Activated naive CD4-positive, alpha-beta T cell treated with anti-CD3 and anti-CD28 coated beads for 36 hours (primary cell): ENCODE measurements at regions of chr1 and their contacts with region 1.

Region 1: GRCh38 chr1:247681288-247681897 is 1.9 kb upstream of the OR13G1 start:
- DNase-seq: peak; percentile 64
- H3K4me3 Mint-ChIP-seq: no peak overlapping the region
- H3K27ac Mint-ChIP-seq: no peak overlapping the region
- H3K4me1 Mint-ChIP-seq: no peaks in the 10 kb centered on the region
- H3K27me3 Mint-ChIP-seq: peaks cover 4% of the 10 kb centered on the region

Region 2: DNA sequence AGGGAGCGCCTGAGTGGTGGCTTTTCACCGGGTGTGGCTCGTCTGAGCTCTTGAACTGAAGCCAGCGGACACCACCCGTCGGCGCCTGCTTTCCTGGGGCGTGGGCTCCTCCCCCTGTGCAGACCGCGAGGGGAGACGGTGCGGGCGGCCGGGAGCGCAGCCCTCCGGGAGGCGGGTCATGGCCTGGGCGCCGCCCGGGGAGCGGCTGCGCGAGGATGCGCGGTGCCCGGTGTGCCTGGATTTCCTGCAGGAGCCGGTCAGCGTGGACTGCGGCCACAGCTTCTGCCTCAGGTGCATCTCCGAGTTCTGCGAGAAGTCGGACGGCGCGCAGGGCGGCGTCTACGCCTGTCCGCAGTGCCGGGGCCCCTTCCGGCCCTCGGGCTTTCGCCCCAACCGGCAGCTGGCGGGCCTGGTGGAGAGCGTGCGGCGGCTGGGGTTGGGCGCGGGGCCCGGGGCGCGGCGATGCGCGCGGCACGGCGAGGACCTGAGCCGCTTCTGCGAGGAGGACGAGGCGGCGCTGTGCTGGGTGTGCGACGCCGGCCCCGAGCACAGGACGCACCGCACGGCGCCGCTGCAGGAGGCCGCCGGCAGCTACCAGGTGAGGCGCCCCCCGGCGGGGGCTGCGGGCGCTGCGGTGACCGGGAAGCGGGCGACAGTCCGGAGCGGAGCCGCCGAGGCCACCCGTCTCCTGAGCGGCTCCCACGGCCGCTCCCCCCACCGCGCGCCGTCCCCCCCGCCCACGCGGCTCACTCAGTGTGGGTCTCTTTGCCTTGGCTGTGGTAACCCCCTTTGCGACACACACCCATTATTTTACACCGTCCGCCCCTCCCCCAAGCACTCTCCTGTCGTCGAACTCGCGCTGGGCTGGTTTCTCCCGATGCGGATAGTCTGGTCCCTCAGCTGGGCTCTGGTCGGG is 175.9 kb after region 1 on chr1 and contains the start of gene TRIM58:
- CTCF ChIA-PET with region 1: no interaction called
- intact Hi-C with region 1: loop called (anchors 5 kb)
- DNase-seq: peak; percentile 47
- H3K4me3 Mint-ChIP-seq: peak within 1 kb of the TSS; percentile 71
- H3K27ac Mint-ChIP-seq: no peak within 1 kb of the TSS
- H3K4me1 Mint-ChIP-seq: peaks cover 9% of the 10 kb centered on the region
- H3K27me3 Mint-ChIP-seq: peaks cover 62% of the 10 kb centered on the region
- total RNA-seq, gene TRIM58: 0.12 to 0.17 TPM

Region 3: DNA sequence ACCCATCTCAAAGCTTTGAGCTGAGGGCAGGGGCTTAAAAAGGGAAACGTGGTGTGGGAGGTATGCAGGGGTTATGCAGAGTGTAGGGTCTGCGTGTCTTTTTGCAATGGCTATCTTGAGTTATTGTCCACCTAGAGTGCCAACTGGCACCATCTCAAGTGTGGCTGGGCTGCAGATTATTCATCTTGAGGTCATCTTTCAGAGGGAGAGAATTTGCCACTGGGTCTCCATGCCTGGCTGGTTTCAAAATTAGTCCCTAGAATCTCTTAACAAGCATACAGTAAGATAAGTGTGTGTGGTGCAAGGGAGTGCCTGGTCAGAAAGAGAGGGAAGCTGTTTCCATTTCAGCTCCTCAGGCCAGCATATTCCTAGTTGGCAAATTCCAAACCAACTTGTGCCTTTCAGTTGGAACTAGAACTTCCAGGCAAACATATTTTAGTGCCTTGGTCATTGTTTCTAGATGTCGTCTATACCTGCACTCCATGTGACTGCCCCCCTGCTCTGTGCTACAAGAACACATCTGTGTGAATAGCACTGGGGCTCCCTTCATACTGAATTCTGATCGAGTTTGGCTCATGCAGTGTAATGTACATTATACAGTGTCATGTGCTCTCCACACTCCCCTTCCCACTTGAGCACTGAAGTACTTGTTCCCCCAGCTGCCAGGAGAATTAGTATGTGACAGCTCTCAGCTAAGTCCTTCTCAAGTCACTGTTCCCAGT is 233.7 kb after region 1 on chr1:
- CTCF ChIA-PET with region 1: no interaction called
- intact Hi-C with region 1: loop called (anchors 5 kb)
- DNase-seq: no peak
- H3K4me3 Mint-ChIP-seq: no peak overlapping the region
- H3K27ac Mint-ChIP-seq: no peak overlapping the region
- H3K4me1 Mint-ChIP-seq: no peaks in the 10 kb centered on the region
- H3K27me3 Mint-ChIP-seq: peaks cover 2% of the 10 kb centered on the region